GM12878 (cell line): ENCODE measurements at regions of chr3 and their contacts with region 1.

Region 1: GRCh38 chr3:158352551-158352950 is 218.4 kb upstream of the MLF1 start:
- DNase-seq: no peak
- ATAC-seq: peak; percentile 52
- H3K4me3 ChIP-seq: no peak overlapping the region
- H3K27ac ChIP-seq: no peak overlapping the region
- H3K4me1 ChIP-seq: peaks cover 19% of the 10 kb centered on the region
- H3K27me3 ChIP-seq: no peaks in the 10 kb centered on the region
- CTCF ChIP-seq: no peak
- EP300 ChIP-seq: no peak
- POLR2A ChIP-seq: no peak
- RAD21 ChIP-seq: no peak

Region 2: DNA sequence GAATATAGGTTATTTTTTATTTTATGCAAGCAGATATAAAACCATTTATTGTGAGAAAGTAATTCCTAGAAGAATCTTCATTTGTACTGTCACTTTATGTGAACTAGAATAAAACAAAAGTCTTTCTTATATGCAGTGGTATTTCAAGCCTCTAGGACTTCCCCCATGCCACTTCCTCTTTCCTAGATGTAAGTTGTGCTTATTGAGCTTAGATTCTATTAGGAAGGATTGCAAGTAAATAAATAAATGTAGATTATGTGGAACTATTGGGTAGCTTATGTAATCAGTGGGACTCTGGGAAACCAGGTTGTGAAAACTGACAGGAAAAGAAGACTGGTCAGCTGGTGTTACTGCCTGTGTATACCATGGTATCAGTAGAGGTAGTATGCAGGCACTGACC is 72.9 kb before region 1 on chr3:
- CTCF ChIA-PET with region 1: no interaction called
- POLR2A ChIA-PET with region 1: interaction called, 10 read pairs
- RAD21 ChIA-PET with region 1: no interaction called
- SMC1A ChIA-PET with region 1: no interaction called
- in situ Hi-C with region 1: no loop called
- intact Hi-C with region 1: no loop called
- DNase-seq: no peak
- ATAC-seq: peak; percentile 57; the same call in 2 of the 3 replicates
- H3K4me3 ChIP-seq: no peak overlapping the region
- H3K27ac ChIP-seq: no peak overlapping the region
- H3K4me1 ChIP-seq: no peaks in the 10 kb centered on the region
- H3K27me3 ChIP-seq: no peaks in the 10 kb centered on the region
- CTCF ChIP-seq: no peak
- EP300 ChIP-seq: no peak
- POLR2A ChIP-seq: no peak
- RAD21 ChIP-seq: no peak

Region 3: DNA sequence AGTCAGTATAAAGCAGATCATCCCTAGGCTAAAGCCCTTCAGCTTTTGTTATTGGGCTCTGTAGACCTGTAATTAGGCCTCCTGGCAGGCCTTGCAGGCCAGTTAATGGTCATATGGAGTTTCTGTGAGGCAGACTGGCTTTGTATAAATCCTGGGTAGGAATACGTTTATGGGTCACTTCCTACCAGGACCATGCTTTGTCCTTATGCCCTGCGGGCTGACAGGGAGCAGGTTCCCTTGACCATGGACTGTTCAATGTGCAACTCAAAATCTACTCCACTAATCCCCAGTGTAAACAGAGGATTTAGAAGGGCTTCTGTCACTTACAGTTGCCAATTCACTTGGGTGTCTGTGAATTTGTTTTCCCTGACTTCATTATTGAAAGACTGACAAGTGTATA is 15.7 kb after region 1 on chr3:
- CTCF ChIA-PET with region 1: interaction called, 5 read pairs
- POLR2A ChIA-PET with region 1: no interaction called
- RAD21 ChIA-PET with region 1: interaction called, 5 read pairs
- SMC1A ChIA-PET with region 1: interaction called, 12 read pairs
- in situ Hi-C with region 1: no loop called
- intact Hi-C with region 1: no loop called
- DNase-seq: no peak
- ATAC-seq: no peak
- H3K4me3 ChIP-seq: no peak overlapping the region
- H3K27ac ChIP-seq: no peak overlapping the region
- H3K4me1 ChIP-seq: no peaks in the 10 kb centered on the region
- H3K27me3 ChIP-seq: no peaks in the 10 kb centered on the region
- CTCF ChIP-seq: no peak
- EP300 ChIP-seq: no peak
- POLR2A ChIP-seq: no peak
- RAD21 ChIP-seq: no peak

Region 4: GRCh38 chr3:158420654-158421396 is 68.3 kb after region 1 on chr3:
- CTCF ChIA-PET with region 1: interaction called, 4 read pairs
- POLR2A ChIA-PET with region 1: no interaction called
- RAD21 ChIA-PET with region 1: interaction called, 7 read pairs
- SMC1A ChIA-PET with region 1: interaction called, 5 read pairs
- in situ Hi-C with region 1: no loop called
- intact Hi-C with region 1: loop called (anchors 2 kb)
- DNase-seq: peak; percentile 71
- ATAC-seq: peak; percentile 91
- H3K4me3 ChIP-seq: no peak overlapping the region
- H3K27ac ChIP-seq: peak overlapping the region; percentile 66
- H3K4me1 ChIP-seq: peaks cover 13% of the 10 kb centered on the region
- H3K27me3 ChIP-seq: no peaks in the 10 kb centered on the region
- CTCF ChIP-seq: no peak
- EP300 ChIP-seq: peak; percentile 75 to 92
- POLR2A ChIP-seq: no peak
- RAD21 ChIP-seq: no peak

Region 5: DNA sequence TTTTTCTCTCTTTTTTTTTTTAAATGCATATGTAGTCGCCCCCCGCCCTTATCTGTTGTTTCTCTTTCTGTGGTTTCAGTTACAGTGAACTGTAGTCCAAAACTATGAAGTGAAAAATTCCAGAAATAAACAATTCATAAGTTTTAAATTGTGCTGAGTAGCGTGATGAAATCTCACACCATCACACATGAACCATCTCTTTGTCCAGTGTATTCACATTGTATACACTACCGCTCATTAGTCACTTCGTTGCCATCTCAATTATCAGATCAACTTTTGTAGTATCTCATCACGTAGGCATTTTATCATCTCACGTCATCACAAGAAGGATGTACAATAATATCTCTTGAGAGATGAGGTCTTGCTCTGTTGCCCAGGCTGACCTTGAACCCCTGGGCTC is 155.9 kb after region 1 on chr3:
- CTCF ChIA-PET with region 1: no interaction called
- POLR2A ChIA-PET with region 1: no interaction called
- RAD21 ChIA-PET with region 1: no interaction called
- SMC1A ChIA-PET with region 1: no interaction called
- in situ Hi-C with region 1: no loop called
- intact Hi-C with region 1: no loop called
- DNase-seq: no peak
- ATAC-seq: no peak
- H3K4me3 ChIP-seq: no peak overlapping the region
- H3K27ac ChIP-seq: no peak overlapping the region
- H3K4me1 ChIP-seq: no peaks in the 10 kb centered on the region
- H3K27me3 ChIP-seq: no peaks in the 10 kb centered on the region
- CTCF ChIP-seq: no peak
- EP300 ChIP-seq: no peak
- POLR2A ChIP-seq: no peak
- RAD21 ChIP-seq: no peak